Motor neuron (in vitro differentiated cells): ENCODE measurements at regions of chr11 and their contacts with region 1.

Region 1: GRCh38 chr11:120108154-120108865 is 29.6 kb downstream of the TRIM29 start:
- ATAC-seq: peak; percentile 92 to 98 (median 96)
- H3K4me3 ChIP-seq: no peak overlapping the region
- H3K27ac ChIP-seq: no peak overlapping the region
- H3K4me1 ChIP-seq: peaks cover 5 to 8% of the 10 kb centered on the region in 2 donors

Region 2: GRCh38 chr11:119481021-119481666 is 627.2 kb before region 1 on chr11:
- in situ Hi-C with region 1: loop called in 4 of 9 experiments (anchors 25 kb)
- ATAC-seq: peak; percentile 78 to 92 (median 87)
- H3K4me3 ChIP-seq: no peak overlapping the region
- H3K27ac ChIP-seq: no peak overlapping the region
- H3K4me1 ChIP-seq: peaks cover 15% of the 10 kb centered on the region in 2 donors

Region 3: GRCh38 chr11:119666463-119667131 is 441.7 kb before region 1 on chr11:
- in situ Hi-C with region 1: loop called in 2 of 9 experiments (anchors 25 kb)
- ATAC-seq: peak; percentile 82 to 99 (median 86)
- H3K4me3 ChIP-seq: no peak overlapping the region
- H3K27ac ChIP-seq: peak overlapping the region in 1 of 2 donors; percentile 56
- H3K4me1 ChIP-seq: peaks cover 28 to 42% of the 10 kb centered on the region in 2 donors

Region 4: GRCh38 chr11:119684361-119685110 is 423.8 kb before region 1 on chr11:
- in situ Hi-C with region 1: loop called in 2 of 9 experiments (anchors 25 kb)
- ATAC-seq: peak in 7 of 8 experiments; percentile 72 to 86 (median 85)
- H3K4me3 ChIP-seq: no peak overlapping the region
- H3K27ac ChIP-seq: peak overlapping the region; percentile 29 to 50
- H3K4me1 ChIP-seq: peaks cover 36 to 40% of the 10 kb centered on the region in 2 donors

Region 5: GRCh38 chr11:119728651-119729580 is 379.4 kb before region 1 on chr11 and contains the start of gene NECTIN1:
- in situ Hi-C with region 1: loop called in 1 of 9 experiments (anchors 10 kb)
- ATAC-seq: peak; percentile 80 to 88 (median 84)
- H3K4me3 ChIP-seq: peak within 1 kb of the TSS; percentile 60 to 91 (median 88)
- H3K27ac ChIP-seq: peak within 1 kb of the TSS; percentile 86 to 89
- H3K4me1 ChIP-seq: peaks cover 24 to 31% of the 10 kb centered on the region in 2 donors
- total RNA-seq, gene NECTIN1: 7.2 to 35.9 (median 19.1) TPM